ENCODE measurements at regions of chr1 and their contacts with region 1.

Region 1: GRCh38 chr1:50368179-50369012 is 54.8 kb downstream of the DMRTA2 start:
- DNase-seq: peak in 16 of 35 experiments; percentile 3 to 41 (median 11)
- ATAC-seq: no peak
- H3K4me3 ChIP-seq: no peak overlapping the region
- H3K4me3 Mint-ChIP-seq: no peak overlapping the region
- H3K27ac ChIP-seq: no peak overlapping the region
- H3K27ac Mint-ChIP-seq: no peak overlapping the region
- H3K4me1 ChIP-seq: peaks cover 0 to 5% of the 10 kb centered on the region in 2 experiments
- H3K4me1 Mint-ChIP-seq: peaks cover 0 to 2% (median 0%) of the 10 kb centered on the region in 3 donors
- H3K27me3 ChIP-seq: peaks cover 6 to 36% of the 10 kb centered on the region in 2 experiments
- H3K27me3 Mint-ChIP-seq: peaks cover 42 to 46% of the 10 kb centered on the region in 2 donors

Region 2: GRCh38 chr1:50423670-50424000 is 55.2 kb after region 1 on chr1:
- CTCF ChIA-PET with region 1: no interaction called
- POLR2A ChIA-PET with region 1: no interaction called
- DNase-seq: no peak
- ATAC-seq: peak in 1 of 4 experiments; percentile 25
- H3K4me3 ChIP-seq: peak overlapping the region in 1 of 2 donors; percentile 54
- H3K4me3 Mint-ChIP-seq: peak overlapping the region; percentile 76 to 83 (median 83)
- H3K27ac ChIP-seq: no peak overlapping the region
- H3K27ac Mint-ChIP-seq: no peak overlapping the region
- H3K4me1 ChIP-seq: peaks cover 13 to 40% of the 10 kb centered on the region in 2 experiments
- H3K4me1 Mint-ChIP-seq: peaks cover 52 to 66% (median 64%) of the 10 kb centered on the region in 3 donors
- H3K27me3 ChIP-seq: peaks cover 25 to 90% of the 10 kb centered on the region in 2 experiments
- H3K27me3 Mint-ChIP-seq: peaks cover 68 to 77% of the 10 kb centered on the region in 2 donors

Region 3: DNA sequence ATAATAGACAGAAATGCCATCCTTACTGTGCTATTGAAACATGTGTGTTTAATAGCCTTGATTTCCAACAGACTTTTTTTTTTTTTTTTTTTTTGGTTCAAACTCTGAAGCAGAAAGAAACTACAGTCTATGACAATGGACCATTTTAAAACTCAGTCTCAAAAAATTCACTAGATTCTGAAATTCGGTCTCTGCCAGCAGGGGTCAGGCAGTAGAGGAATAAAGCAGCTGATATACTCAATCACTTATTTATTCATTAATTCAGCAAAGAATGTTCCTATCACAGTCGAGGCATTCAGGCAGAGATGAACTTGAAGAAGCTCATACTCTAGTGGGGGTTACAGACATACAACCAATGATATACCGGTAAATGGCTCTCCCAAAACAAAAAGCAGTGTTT is 315.8 kb after region 1 on chr1:
- CTCF ChIA-PET with region 1: interaction called in 1 of 2 experiments, 12 read pairs
- POLR2A ChIA-PET with region 1: no interaction called
- DNase-seq: no peak
- ATAC-seq: no peak
- H3K4me3 ChIP-seq: no peak overlapping the region
- H3K4me3 Mint-ChIP-seq: no peak overlapping the region
- H3K27ac ChIP-seq: no peak overlapping the region
- H3K27ac Mint-ChIP-seq: no peak overlapping the region
- H3K4me1 ChIP-seq: no peaks in the 10 kb centered on the region
- H3K4me1 Mint-ChIP-seq: no peaks in the 10 kb centered on the region
- H3K27me3 ChIP-seq: no peaks in the 10 kb centered on the region
- H3K27me3 Mint-ChIP-seq: no peaks in the 10 kb centered on the region

Region 4: GRCh38 chr1:51636764-51637522 is 1268.5 kb after region 1 on chr1:
- CTCF ChIA-PET with region 1: interaction called in 1 of 2 experiments, 11 read pairs
- POLR2A ChIA-PET with region 1: no interaction called
- DNase-seq: no peak
- ATAC-seq: no peak
- H3K4me3 ChIP-seq: no peak overlapping the region
- H3K4me3 Mint-ChIP-seq: no peak overlapping the region
- H3K27ac ChIP-seq: no peak overlapping the region
- H3K27ac Mint-ChIP-seq: no peak overlapping the region
- H3K4me1 ChIP-seq: no peaks in the 10 kb centered on the region
- H3K4me1 Mint-ChIP-seq: peaks cover 13 to 21% (median 21%) of the 10 kb centered on the region in 3 donors
- H3K27me3 ChIP-seq: no peaks in the 10 kb centered on the region
- H3K27me3 Mint-ChIP-seq: no peaks in the 10 kb centered on the region

Measured in T-cell (primary cell).